CD4-positive, alpha-beta T cell (primary cell): ENCODE measurements at regions of chr18 and their contacts with region 1.

Region 1: GRCh38 chr18:79393635-79394533 is 1.8 kb upstream of the NFATC1 start:
- DNase-seq: peak in 7 of 14 experiments; percentile 44 to 73 (median 54)
- ATAC-seq: peak; percentile 18
- H3K4me3 ChIP-seq: peak overlapping the region; percentile 48
- H3K4me3 Mint-ChIP-seq: peak overlapping the region; percentile 98
- H3K27ac ChIP-seq: no peak overlapping the region
- H3K27ac Mint-ChIP-seq: peak overlapping the region; percentile 93
- H3K4me1 ChIP-seq: peaks cover 46% of the 10 kb centered on the region
- H3K4me1 Mint-ChIP-seq: peaks cover 45% of the 10 kb centered on the region
- H3K27me3 ChIP-seq: peaks cover 0 to 3% of the 10 kb centered on the region in 2 experiments
- H3K27me3 Mint-ChIP-seq: no peaks in the 10 kb centered on the region
- CTCF ChIP-seq: no peak

Region 2: DNA sequence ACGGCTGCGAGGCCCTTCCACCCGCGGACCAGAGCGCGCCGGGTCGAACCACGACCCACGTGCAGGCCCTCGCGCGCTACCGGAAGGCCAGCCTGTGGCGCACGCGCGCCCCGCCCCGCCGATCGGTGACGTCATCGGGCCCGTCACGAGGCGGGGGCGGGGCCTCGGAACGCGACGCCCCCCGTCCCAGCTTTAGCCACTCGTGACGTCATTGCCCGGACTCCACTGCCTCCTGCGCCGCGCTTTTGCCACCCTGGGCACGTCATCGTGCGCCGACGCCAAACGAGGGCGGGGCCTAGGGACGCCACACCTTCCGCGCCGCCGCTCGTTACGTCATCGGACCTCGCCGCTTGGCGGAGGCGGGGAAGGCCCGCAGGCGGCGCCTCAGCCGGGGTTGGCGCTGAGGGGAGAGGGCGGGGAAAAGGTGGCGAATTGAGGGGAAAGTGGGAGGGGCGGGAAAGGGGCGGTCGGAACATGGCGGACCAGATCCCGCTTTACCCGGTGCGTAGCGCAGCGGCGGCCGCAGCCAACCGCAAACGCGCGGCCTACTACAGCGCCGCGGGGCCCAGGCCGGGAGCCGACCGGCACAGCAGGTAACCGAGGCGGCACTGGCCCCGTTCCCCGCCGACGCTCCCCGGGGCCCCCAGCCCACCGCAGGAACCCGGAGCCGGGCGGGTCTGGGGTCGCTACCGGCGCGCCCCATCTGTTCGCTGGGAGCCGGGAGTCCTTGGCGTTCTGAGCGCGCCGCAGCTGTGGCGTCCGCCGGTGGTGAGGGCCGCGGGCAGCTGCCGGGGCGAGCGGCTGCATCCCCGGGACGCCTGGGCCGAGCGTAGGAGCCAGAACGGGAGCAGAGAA is 324.7 kb before region 1 on chr18 and contains the start of gene ATP9B:
- CTCF ChIA-PET with region 1: no interaction called
- POLR2A ChIA-PET with region 1: no interaction called
- intact Hi-C with region 1: loop called in 1 of 2 experiments (anchors 5 kb)
- DNase-seq: peak; percentile 94 to 100 (median 98)
- ATAC-seq: peak; percentile 77
- H3K4me3 ChIP-seq: peak within 1 kb of the TSS; percentile 56
- H3K4me3 Mint-ChIP-seq: peak within 1 kb of the TSS; percentile 91
- H3K27ac ChIP-seq: peak within 1 kb of the TSS; percentile 97 to 98
- H3K27ac Mint-ChIP-seq: peak within 1 kb of the TSS; percentile 100
- H3K4me1 ChIP-seq: peaks cover 21% of the 10 kb centered on the region
- H3K4me1 Mint-ChIP-seq: peaks cover 60% of the 10 kb centered on the region
- H3K27me3 ChIP-seq: no peaks in the 10 kb centered on the region
- H3K27me3 Mint-ChIP-seq: peaks cover 7% of the 10 kb centered on the region
- CTCF ChIP-seq: no peak
- total RNA-seq, gene ATP9B: 61.9 to 63.5 TPM

Region 3: GRCh38 chr18:79092874-79093273 is 301.0 kb before region 1 on chr18:
- CTCF ChIA-PET with region 1: no interaction called
- POLR2A ChIA-PET with region 1: no interaction called
- intact Hi-C with region 1: no loop called
- DNase-seq: no peak
- ATAC-seq: no peak
- H3K4me3 ChIP-seq: no peak overlapping the region
- H3K4me3 Mint-ChIP-seq: no peak overlapping the region
- H3K27ac ChIP-seq: no peak overlapping the region
- H3K27ac Mint-ChIP-seq: no peak overlapping the region
- H3K4me1 ChIP-seq: peaks cover 9% of the 10 kb centered on the region
- H3K4me1 Mint-ChIP-seq: peaks cover 68% of the 10 kb centered on the region
- H3K27me3 ChIP-seq: no peaks in the 10 kb centered on the region
- H3K27me3 Mint-ChIP-seq: no peaks in the 10 kb centered on the region
- CTCF ChIP-seq: no peak

Region 4: DNA sequence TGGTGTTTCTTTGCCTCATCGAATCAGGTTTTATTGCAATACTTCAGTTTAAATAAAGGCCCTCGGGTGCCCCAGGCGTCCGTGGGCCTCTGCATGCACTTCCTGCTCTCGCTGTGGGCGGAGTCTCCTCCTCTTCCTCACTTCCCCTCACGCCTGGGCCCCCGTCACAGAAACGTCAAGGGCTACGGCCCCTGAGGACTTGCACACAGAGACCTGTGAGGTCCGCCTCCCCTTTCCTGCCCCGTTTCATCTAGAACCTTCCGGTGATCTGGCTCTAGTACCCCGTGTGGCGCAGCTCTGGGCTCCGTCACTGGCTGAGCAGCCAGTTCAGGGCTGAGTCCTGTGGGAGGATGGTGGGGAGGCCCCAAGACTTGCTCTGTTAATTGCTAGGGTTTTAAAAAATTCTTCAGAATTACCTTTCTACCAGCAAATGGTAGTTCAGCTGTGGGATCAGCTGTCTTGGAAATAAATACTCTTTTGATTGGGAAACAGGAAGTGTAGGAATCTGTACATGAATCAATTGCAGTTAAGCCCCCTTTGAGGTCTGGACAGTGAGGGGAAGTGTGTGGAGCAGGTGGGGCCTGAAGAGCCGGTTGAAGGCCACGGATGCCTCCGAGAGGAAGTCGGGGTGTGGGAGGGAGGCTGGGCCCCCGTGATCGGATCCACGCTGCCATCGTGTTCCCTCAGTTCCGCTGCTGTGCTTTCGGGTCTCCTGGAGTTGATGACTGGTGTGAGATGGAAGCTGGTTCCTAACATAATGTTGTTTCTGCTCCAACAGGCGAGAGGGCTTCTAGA is 12.1 kb after region 1 on chr18:
- CTCF ChIA-PET with region 1: interaction called, 18 read pairs
- POLR2A ChIA-PET with region 1: interaction called, 28 read pairs
- intact Hi-C with region 1: no loop called
- DNase-seq: peak; percentile 78 to 98 (median 86)
- ATAC-seq: peak; percentile 76
- H3K4me3 ChIP-seq: peak overlapping the region; percentile 40
- H3K4me3 Mint-ChIP-seq: peak overlapping the region; percentile 90
- H3K27ac ChIP-seq: peak overlapping the region; percentile 92 to 97
- H3K27ac Mint-ChIP-seq: peak overlapping the region; percentile 96
- H3K4me1 ChIP-seq: peaks cover 63% of the 10 kb centered on the region
- H3K4me1 Mint-ChIP-seq: peaks cover 56% of the 10 kb centered on the region
- H3K27me3 ChIP-seq: no peaks in the 10 kb centered on the region
- H3K27me3 Mint-ChIP-seq: no peaks in the 10 kb centered on the region
- CTCF ChIP-seq: peak; percentile 16

Region 5: GRCh38 chr18:79523736-79524180 is 129.9 kb after region 1 on chr18:
- CTCF ChIA-PET with region 1: interaction called, 5 read pairs
- POLR2A ChIA-PET with region 1: interaction called, 34 read pairs
- intact Hi-C with region 1: loop called (anchors 2 to 5 kb)
- DNase-seq: peak in 13 of 14 experiments; percentile 45 to 91 (median 61)
- ATAC-seq: peak; percentile 52
- H3K4me3 ChIP-seq: peak overlapping the region; percentile 48
- H3K4me3 Mint-ChIP-seq: peak overlapping the region; percentile 92
- H3K27ac ChIP-seq: peak overlapping the region; percentile 84 to 92
- H3K27ac Mint-ChIP-seq: peak overlapping the region; percentile 96
- H3K4me1 ChIP-seq: peaks cover 77% of the 10 kb centered on the region
- H3K4me1 Mint-ChIP-seq: peaks cover 82% of the 10 kb centered on the region
- H3K27me3 ChIP-seq: no peaks in the 10 kb centered on the region
- H3K27me3 Mint-ChIP-seq: no peaks in the 10 kb centered on the region
- CTCF ChIP-seq: no peak

Region 6: DNA sequence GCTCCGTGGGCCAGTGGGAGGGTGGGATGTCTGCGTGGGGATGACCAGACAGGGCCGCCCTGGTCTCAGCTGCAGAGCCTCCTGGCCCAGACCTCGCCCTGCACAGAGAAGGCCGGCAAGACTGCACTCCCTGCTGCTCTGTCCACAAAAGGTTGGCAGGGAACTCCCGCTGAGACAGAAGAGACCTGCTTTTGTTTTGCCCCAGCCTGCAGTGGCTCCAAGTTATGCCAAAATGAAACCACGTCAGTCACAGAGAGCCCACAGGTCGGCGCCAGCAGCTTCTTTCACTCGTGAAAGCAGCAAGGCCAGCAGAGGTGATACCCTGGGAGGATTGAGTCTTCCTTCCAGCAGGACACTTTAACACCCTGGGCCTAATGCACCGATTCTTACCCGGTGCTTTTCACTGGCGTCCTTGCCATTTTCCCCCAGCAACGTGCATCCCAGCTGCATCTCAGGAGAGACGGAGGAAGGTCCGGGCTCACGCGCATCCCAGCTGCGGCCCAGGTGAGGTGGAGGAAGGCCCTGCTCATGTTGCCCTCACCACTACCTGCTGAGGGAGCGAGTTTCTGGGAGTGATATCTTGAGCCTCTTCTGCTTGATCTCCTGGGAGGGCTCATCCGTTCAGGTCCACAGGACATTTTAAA is 263.6 kb after region 1 on chr18:
- CTCF ChIA-PET with region 1: no interaction called
- POLR2A ChIA-PET with region 1: no interaction called
- intact Hi-C with region 1: no loop called
- DNase-seq: no peak
- ATAC-seq: no peak
- H3K4me3 ChIP-seq: no peak overlapping the region
- H3K4me3 Mint-ChIP-seq: no peak overlapping the region
- H3K27ac ChIP-seq: no peak overlapping the region
- H3K27ac Mint-ChIP-seq: no peak overlapping the region
- H3K4me1 ChIP-seq: no peaks in the 10 kb centered on the region
- H3K4me1 Mint-ChIP-seq: no peaks in the 10 kb centered on the region
- H3K27me3 ChIP-seq: peaks cover 0 to 6% of the 10 kb centered on the region in 2 experiments
- H3K27me3 Mint-ChIP-seq: peaks cover 9% of the 10 kb centered on the region
- CTCF ChIP-seq: no peak

Region 7: GRCh38 chr18:79951578-79952455 is 557.9 kb after region 1 on chr18 and contains the start of gene SLC66A2:
- CTCF ChIA-PET with region 1: no interaction called
- POLR2A ChIA-PET with region 1: no interaction called
- intact Hi-C with region 1: loop called in 1 of 2 experiments (anchors 5 kb)
- DNase-seq: peak; percentile 86 to 99 (median 96)
- ATAC-seq: peak; percentile 91
- H3K4me3 ChIP-seq: peak within 1 kb of the TSS; percentile 62
- H3K4me3 Mint-ChIP-seq: peak within 1 kb of the TSS; percentile 87
- H3K27ac ChIP-seq: peak within 1 kb of the TSS in 1 of 2 donors; percentile 35
- H3K27ac Mint-ChIP-seq: peak within 1 kb of the TSS; percentile 80
- H3K4me1 ChIP-seq: peaks cover 36% of the 10 kb centered on the region
- H3K4me1 Mint-ChIP-seq: peaks cover 29% of the 10 kb centered on the region
- H3K27me3 ChIP-seq: no peaks in the 10 kb centered on the region
- H3K27me3 Mint-ChIP-seq: no peaks in the 10 kb centered on the region
- CTCF ChIP-seq: no peak
- total RNA-seq, gene SLC66A2: 44.5 to 44.8 TPM